ENCODE measurements at regions of chr6 and their contacts with region 1.

Region 1: DNA sequence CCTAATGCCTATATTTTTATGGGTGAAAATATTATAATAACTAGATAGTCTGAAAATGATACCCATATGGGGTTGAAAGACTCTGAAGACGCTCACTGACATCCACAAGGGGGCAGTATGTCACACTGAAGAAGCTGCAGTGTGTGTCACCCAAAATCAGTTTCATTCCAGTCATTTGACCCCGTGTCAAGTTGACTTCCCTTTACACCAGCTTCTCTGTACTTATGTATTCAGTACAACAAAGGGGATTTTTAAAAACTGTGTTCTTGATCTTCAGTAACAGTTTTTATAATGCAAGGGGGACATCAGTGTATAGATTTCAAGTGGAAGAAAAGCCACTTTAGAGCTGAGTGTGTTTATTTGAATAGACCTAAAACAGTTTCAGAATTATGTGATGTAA is 19.3 kb downstream of the FAXC start:
- DNase-seq: peak; percentile 52
- ATAC-seq: peak; percentile 78
- H3K4me3 Mint-ChIP-seq: no peak overlapping the region
- H3K27ac Mint-ChIP-seq: no peak overlapping the region
- H3K4me1 Mint-ChIP-seq: peaks cover 6% of the 10 kb centered on the region
- H3K27me3 Mint-ChIP-seq: no peaks in the 10 kb centered on the region
- CTCF ChIP-seq: peak; percentile 49; the same call in 1 of the 2 replicates

Region 2: GRCh38 chr6:99305021-99305554 is 25.1 kb before region 1 on chr6:
- CTCF ChIA-PET with region 1: interaction called, 12 read pairs
- POLR2A ChIA-PET with region 1: no interaction called
- DNase-seq: no peak
- ATAC-seq: no peak
- H3K4me3 Mint-ChIP-seq: no peak overlapping the region
- H3K27ac Mint-ChIP-seq: no peak overlapping the region
- H3K4me1 Mint-ChIP-seq: peaks cover 9% of the 10 kb centered on the region
- H3K27me3 Mint-ChIP-seq: no peaks in the 10 kb centered on the region
- CTCF ChIP-seq: no peak

Region 3: GRCh38 chr6:99344289-99344688 is 14.1 kb after region 1 on chr6:
- CTCF ChIA-PET with region 1: interaction called, 12 read pairs
- POLR2A ChIA-PET with region 1: interaction called, 5 read pairs
- DNase-seq: no peak
- ATAC-seq: peak; percentile 34; the same call in 1 of the 2 replicates
- H3K4me3 Mint-ChIP-seq: no peak overlapping the region
- H3K27ac Mint-ChIP-seq: 0 out of 2 replicates have a peak overlapping the region, but pooled peaks have one; percentile 1
- H3K4me1 Mint-ChIP-seq: peaks cover 38% of the 10 kb centered on the region
- H3K27me3 Mint-ChIP-seq: no peaks in the 10 kb centered on the region
- CTCF ChIP-seq: no peak

Region 4: DNA sequence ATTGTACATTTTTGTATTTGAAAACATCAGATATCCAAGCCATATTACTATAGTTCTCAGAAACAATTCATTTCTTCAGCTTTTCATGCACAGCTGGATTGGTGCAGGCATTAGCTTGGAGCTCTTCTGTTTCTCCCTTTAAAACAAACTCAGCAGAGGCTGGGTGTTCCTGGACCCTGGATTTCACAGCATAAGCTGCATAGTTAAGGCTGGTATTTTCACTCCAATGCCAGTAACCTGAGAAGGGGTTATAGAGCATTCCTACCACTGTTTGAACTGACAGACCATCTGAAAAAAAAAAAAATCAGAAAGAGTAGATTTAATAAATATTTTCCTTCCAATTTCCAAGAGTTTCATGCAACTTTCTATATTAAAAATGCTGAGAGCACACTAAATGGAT is 39.4 kb after region 1 on chr6:
- CTCF ChIA-PET with region 1: interaction called, 17 read pairs
- POLR2A ChIA-PET with region 1: no interaction called
- DNase-seq: peak; percentile 16
- ATAC-seq: peak; percentile 98
- H3K4me3 Mint-ChIP-seq: no peak overlapping the region
- H3K27ac Mint-ChIP-seq: no peak overlapping the region; the same call in 1 of the 2 replicates
- H3K4me1 Mint-ChIP-seq: peaks cover 9% of the 10 kb centered on the region
- H3K27me3 Mint-ChIP-seq: no peaks in the 10 kb centered on the region
- CTCF ChIP-seq: no peak

Region 5: GRCh38 chr6:99425647-99426453 is 95.7 kb after region 1 on chr6:
- CTCF ChIA-PET with region 1: interaction called, 12 read pairs
- POLR2A ChIA-PET with region 1: no interaction called
- DNase-seq: peak; percentile 93
- ATAC-seq: peak; percentile 80
- H3K4me3 Mint-ChIP-seq: peak overlapping the region; percentile 97
- H3K27ac Mint-ChIP-seq: peak overlapping the region; percentile 100
- H3K4me1 Mint-ChIP-seq: peaks cover 72% of the 10 kb centered on the region
- H3K27me3 Mint-ChIP-seq: no peaks in the 10 kb centered on the region; the same call in 1 of the 2 replicates
- CTCF ChIP-seq: no peak